Breast epithelium (tissue), 4 donors: ENCODE measurements at regions of chrX and their contacts with region 1.

Region 1: GRCh38 chrX:151448509-151448908 is 51.5 kb downstream of the VMA21 start:
- DNase-seq: no peak
- H3K4me3 ChIP-seq: no peak overlapping the region
- H3K27ac ChIP-seq: no peak overlapping the region
- H3K4me1 ChIP-seq: no peaks in the 10 kb centered on the region
- H3K27me3 ChIP-seq: peaks cover 0 to 3% of the 10 kb centered on the region in 2 donors
- CTCF ChIP-seq: no peak
- POLR2A ChIP-seq: no peak

Region 2: GRCh38 chrX:149527705-149528104 is 1920.8 kb before region 1 on chrX:
- intact Hi-C with region 1: no loop called
- DNase-seq: no peak
- H3K4me3 ChIP-seq: no peak overlapping the region
- H3K27ac ChIP-seq: no peak overlapping the region
- H3K4me1 ChIP-seq: no peaks in the 10 kb centered on the region
- H3K27me3 ChIP-seq: no peaks in the 10 kb centered on the region
- CTCF ChIP-seq: peak in 1 of 3 donors; percentile 42
- POLR2A ChIP-seq: no peak

Region 3: DNA sequence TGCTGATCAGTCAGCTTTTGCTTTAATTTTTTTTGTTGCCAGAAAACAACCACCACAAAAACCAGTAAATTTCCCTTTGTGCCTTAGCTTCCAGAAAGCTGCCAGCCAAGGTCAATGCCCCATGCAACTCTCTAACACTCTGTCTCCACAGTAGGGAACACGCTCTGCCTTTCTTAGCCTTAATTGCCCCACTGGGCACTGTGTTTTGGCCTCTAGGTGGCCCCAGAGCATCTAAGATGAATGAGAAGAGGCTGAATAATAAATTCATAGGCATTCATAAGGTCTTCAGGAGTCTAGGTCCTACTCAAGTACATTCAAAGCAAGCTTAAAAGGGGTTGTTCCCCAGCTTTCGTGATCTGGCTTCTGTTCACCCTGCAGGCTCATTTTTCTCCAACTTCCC is 57.3 kb after region 1 on chrX:
- intact Hi-C with region 1: loop called (anchors 2 kb)
- DNase-seq: no peak
- H3K4me3 ChIP-seq: no peak overlapping the region
- H3K27ac ChIP-seq: no peak overlapping the region
- H3K4me1 ChIP-seq: no peaks in the 10 kb centered on the region
- H3K27me3 ChIP-seq: peaks cover 0 to 24% of the 10 kb centered on the region in 2 donors
- CTCF ChIP-seq: no peak
- POLR2A ChIP-seq: no peak

Region 4: GRCh38 chrX:151852294-151852693 is 403.8 kb after region 1 on chrX:
- intact Hi-C with region 1: no loop called
- DNase-seq: no peak
- H3K4me3 ChIP-seq: no peak overlapping the region
- H3K27ac ChIP-seq: no peak overlapping the region
- H3K4me1 ChIP-seq: no peaks in the 10 kb centered on the region
- H3K27me3 ChIP-seq: peaks cover 0 to 21% of the 10 kb centered on the region in 2 donors
- CTCF ChIP-seq: no peak
- POLR2A ChIP-seq: no peak